ENCODE measurements at regions of chr2 and their contacts with region 1.

Region 1: GRCh38 chr2:71157124-71157793 is 26.8 kb downstream of the MPHOSPH10 start:
- DNase-seq: peak; percentile 63 to 75 (median 73)
- ATAC-seq: peak; percentile 93
- H3K4me3 ChIP-seq: no peak overlapping the region
- H3K27ac ChIP-seq: no peak overlapping the region
- H3K4me1 ChIP-seq: no peaks in the 10 kb centered on the region; a peak in 1 of 5 replicates
- H3K27me3 ChIP-seq: peaks cover 9 to 39% of the 10 kb centered on the region in 2 experiments; a peak in 4 of 5 replicates
- CTCF ChIP-seq: peak; percentile 71 to 76 (median 74)
- EP300 ChIP-seq: no peak
- POLR2A ChIP-seq: no peak
- RAD21 ChIP-seq: peak; percentile 33 to 80; a peak in 3 of 4 replicates

Region 2: DNA sequence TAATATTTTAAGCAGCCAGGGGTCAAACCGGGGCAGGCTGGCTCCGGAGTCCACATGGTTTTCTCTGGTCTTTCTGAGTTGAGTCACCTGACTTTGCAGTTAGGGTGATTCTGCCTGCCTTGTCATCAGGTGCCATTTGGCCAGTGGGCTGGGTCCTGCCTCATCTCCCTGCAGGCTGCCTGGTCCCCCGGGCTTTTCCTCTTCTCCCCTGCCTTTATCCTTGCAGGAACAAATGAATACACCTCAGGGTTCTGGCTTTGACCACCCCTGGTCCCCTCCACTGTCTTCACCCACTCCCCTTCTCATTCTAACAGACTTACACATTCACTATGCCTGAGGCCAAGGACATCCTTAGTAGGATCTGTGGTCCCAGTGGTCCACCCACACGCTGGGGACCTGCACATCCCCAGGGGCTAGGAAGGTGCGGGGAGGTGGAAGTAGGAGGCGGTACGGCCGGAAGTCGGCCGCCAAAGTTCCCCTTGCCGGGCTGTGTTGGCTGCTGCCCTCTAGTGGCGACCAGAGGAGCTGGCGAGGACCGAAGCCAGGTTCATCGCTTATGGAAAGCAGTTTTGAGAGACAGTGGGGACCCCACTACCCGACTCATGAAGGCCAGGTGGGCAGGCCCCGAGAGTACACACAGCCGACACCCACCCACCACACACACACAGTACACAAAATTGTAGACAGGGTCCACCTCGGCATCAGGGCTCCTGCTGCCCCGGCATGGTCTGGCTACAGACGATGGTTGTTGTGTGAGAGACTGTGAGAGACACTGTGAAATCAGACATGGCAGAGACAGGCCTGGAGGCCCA is 156.3 kb before region 1 on chr2:
- CTCF ChIA-PET with region 1: no interaction called
- POLR2A ChIA-PET with region 1: no interaction called
- in situ Hi-C with region 1: no loop called
- intact Hi-C with region 1: loop called (anchors 10 kb)
- DNase-seq: peak; percentile 77 to 86 (median 79)
- ATAC-seq: peak; percentile 95
- H3K4me3 ChIP-seq: peak overlapping the region; percentile 23
- H3K27ac ChIP-seq: peak overlapping the region; percentile 22; the same call in 2 of the 3 replicates
- H3K4me1 ChIP-seq: peaks cover 15 to 17% of the 10 kb centered on the region in 2 experiments; a peak in 4 of 5 replicates
- H3K27me3 ChIP-seq: no peaks in the 10 kb centered on the region
- CTCF ChIP-seq: peak; percentile 89 to 95 (median 91)
- EP300 ChIP-seq: no peak
- POLR2A ChIP-seq: peak; percentile 59
- RAD21 ChIP-seq: peak in 1 of 2 experiments; percentile 51; a peak in 2 of 4 replicates

Region 3: DNA sequence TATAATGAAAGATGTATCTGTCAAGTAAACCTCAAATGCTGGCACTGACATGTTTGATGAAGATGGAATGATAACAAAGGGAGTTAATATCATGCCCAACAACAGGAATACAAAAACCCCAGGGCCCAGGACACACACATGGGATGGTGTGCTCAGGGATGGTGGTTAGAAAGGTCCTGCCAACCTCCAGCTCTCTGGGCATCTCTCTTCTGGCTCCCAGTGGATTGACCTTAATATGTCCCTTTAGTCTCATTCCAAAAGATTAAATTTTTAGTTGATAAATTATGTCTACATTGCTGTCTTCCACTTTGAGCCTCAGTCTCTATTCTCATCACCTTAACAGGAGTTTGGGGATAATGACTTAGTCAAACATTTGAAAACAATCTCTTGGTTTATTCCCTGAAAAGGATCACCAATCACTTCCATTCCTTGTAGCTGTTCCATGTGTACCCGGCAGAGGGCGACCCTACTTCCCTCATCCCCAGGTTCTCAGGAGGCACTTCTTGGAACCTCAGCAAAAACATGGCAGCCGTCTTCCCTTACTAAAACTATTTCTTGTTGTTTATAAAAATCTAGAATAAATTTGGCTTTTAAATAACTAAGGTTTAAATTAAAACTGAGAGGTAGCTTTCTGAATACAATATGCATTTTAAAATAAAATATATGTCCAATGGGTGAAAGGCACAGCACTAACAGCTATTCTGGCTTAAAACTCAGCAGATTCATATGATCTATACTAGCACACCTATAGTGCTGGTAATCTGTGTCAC is 56.9 kb before region 1 on chr2:
- CTCF ChIA-PET with region 1: no interaction called
- POLR2A ChIA-PET with region 1: interaction called, 3 read pairs
- in situ Hi-C with region 1: no loop called
- intact Hi-C with region 1: loop called (anchors 1 kb)
- DNase-seq: peak; percentile 79 to 85 (median 84)
- ATAC-seq: peak; percentile 95
- H3K4me3 ChIP-seq: no peak overlapping the region
- H3K27ac ChIP-seq: no peak overlapping the region
- H3K4me1 ChIP-seq: no peaks in the 10 kb centered on the region
- H3K27me3 ChIP-seq: no peaks in the 10 kb centered on the region
- CTCF ChIP-seq: peak; percentile 73 to 88 (median 82); a peak in 5 of 6 replicates
- EP300 ChIP-seq: no peak
- POLR2A ChIP-seq: no peak
- RAD21 ChIP-seq: peak; percentile 36 to 72; a peak in 3 of 4 replicates

Region 4: GRCh38 chr2:71299507-71299906 is 142.2 kb after region 1 on chr2:
- CTCF ChIA-PET with region 1: no interaction called
- POLR2A ChIA-PET with region 1: no interaction called
- in situ Hi-C with region 1: no loop called
- intact Hi-C with region 1: loop called (anchors 5 kb)
- DNase-seq: peak; percentile 33 to 51 (median 44)
- ATAC-seq: peak; percentile 53; the same call in 2 of the 3 replicates
- H3K4me3 ChIP-seq: no peak overlapping the region
- H3K27ac ChIP-seq: no peak overlapping the region
- H3K4me1 ChIP-seq: no peaks in the 10 kb centered on the region
- H3K27me3 ChIP-seq: peaks cover 7 to 12% of the 10 kb centered on the region in 2 experiments; a peak in 4 of 5 replicates
- CTCF ChIP-seq: peak; percentile 51 to 84 (median 52); a peak in 5 of 6 replicates
- EP300 ChIP-seq: no peak
- POLR2A ChIP-seq: no peak
- RAD21 ChIP-seq: peak; percentile 65 to 80

Region 5: GRCh38 chr2:71471276-71471675 is 314.0 kb after region 1 on chr2:
- CTCF ChIA-PET with region 1: no interaction called
- POLR2A ChIA-PET with region 1: no interaction called
- in situ Hi-C with region 1: no loop called
- intact Hi-C with region 1: no loop called
- DNase-seq: no peak
- ATAC-seq: no peak
- H3K4me3 ChIP-seq: no peak overlapping the region
- H3K27ac ChIP-seq: no peak overlapping the region
- H3K4me1 ChIP-seq: peaks cover 2 to 6% of the 10 kb centered on the region in 2 experiments; a peak in 3 of 5 replicates
- H3K27me3 ChIP-seq: peaks cover 10 to 18% of the 10 kb centered on the region in 2 experiments; a peak in 3 of 5 replicates
- CTCF ChIP-seq: no peak
- EP300 ChIP-seq: no peak
- POLR2A ChIP-seq: no peak
- RAD21 ChIP-seq: no peak

Region 6: GRCh38 chr2:71505086-71505769 is 348.0 kb after region 1 on chr2:
- CTCF ChIA-PET with region 1: no interaction called
- POLR2A ChIA-PET with region 1: interaction called, 3 read pairs
- in situ Hi-C with region 1: loop called (anchors 5 kb)
- intact Hi-C with region 1: loop called (anchors 5 kb)
- DNase-seq: peak in 2 of 4 experiments; percentile 12 to 29
- ATAC-seq: peak; percentile 11; the same call in 1 of the 3 replicates
- H3K4me3 ChIP-seq: no peak overlapping the region
- H3K27ac ChIP-seq: no peak overlapping the region
- H3K4me1 ChIP-seq: no peaks in the 10 kb centered on the region; a peak in 1 of 5 replicates
- H3K27me3 ChIP-seq: peaks cover 0 to 20% of the 10 kb centered on the region in 2 experiments; a peak in 2 of 5 replicates
- CTCF ChIP-seq: no peak
- EP300 ChIP-seq: no peak
- POLR2A ChIP-seq: no peak
- RAD21 ChIP-seq: no peak

Region 7: DNA sequence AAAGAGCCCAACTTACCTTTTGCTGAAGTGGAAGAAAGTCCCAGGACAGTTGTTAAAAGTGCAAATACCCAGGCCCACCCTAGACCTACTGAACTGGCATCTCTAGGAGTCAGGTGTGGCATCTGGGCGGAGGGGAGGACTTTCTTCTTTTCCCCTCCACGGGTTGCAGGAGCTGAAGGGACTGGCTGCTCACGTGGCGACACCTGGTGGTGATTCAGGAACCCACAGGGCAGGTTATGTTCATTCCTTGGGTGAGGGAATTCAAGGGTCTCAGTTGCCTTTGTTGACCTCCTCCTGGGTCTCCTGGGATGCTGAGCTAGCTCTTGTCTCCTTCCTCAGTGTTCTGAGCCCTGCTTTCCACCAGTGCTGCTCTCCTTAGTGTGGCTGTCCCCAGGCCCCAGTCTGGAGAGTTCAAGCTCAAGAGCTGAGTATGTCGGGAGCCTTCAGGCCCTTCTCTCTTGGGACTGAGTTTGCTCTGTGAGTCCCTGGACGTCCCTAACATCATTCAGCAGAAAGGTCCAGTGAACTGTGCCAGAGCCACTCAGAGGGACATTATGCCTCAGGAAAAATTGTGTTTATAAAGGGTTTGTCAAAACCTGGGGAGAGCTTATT is 353.0 kb after region 1 on chr2:
- CTCF ChIA-PET with region 1: no interaction called
- POLR2A ChIA-PET with region 1: interaction called, 3 read pairs
- in situ Hi-C with region 1: loop called (anchors 5 kb)
- intact Hi-C with region 1: loop called (anchors 5 kb)
- DNase-seq: peak; percentile 74 to 80 (median 76)
- ATAC-seq: peak; percentile 89
- H3K4me3 ChIP-seq: no peak overlapping the region
- H3K27ac ChIP-seq: no peak overlapping the region
- H3K4me1 ChIP-seq: no peaks in the 10 kb centered on the region; a peak in 1 of 5 replicates
- H3K27me3 ChIP-seq: peaks cover 0 to 40% of the 10 kb centered on the region in 2 experiments; a peak in 4 of 5 replicates
- CTCF ChIP-seq: peak; percentile 83 to 91 (median 89)
- EP300 ChIP-seq: no peak
- POLR2A ChIP-seq: no peak
- RAD21 ChIP-seq: peak; percentile 85 to 96

Measured in K562 (cell line).